ENCODE measurements at regions of chr1 and their contacts with region 1.

Region 1: GRCh38 chr1:154324669-154325582 is at the start of gene ATP8B2:
- DNase-seq: peak; percentile 72 to 91 (median 82)
- ATAC-seq: peak; percentile 48 to 54
- H3K4me3 Mint-ChIP-seq: peak within 1 kb of the TSS; percentile 86 to 99 (median 95)
- H3K27ac Mint-ChIP-seq: peak within 1 kb of the TSS; percentile 84 to 98 (median 94)
- H3K4me1 Mint-ChIP-seq: peaks cover 23 to 49% (median 46%) of the 10 kb centered on the region in 4 donors
- H3K27me3 Mint-ChIP-seq: peaks cover 0 to 3% (median 0%) of the 10 kb centered on the region in 5 donors
- polyA plus RNA-seq, gene ATP8B2: 48.5 to 65.1 (median 55.6) TPM

Region 2: DNA sequence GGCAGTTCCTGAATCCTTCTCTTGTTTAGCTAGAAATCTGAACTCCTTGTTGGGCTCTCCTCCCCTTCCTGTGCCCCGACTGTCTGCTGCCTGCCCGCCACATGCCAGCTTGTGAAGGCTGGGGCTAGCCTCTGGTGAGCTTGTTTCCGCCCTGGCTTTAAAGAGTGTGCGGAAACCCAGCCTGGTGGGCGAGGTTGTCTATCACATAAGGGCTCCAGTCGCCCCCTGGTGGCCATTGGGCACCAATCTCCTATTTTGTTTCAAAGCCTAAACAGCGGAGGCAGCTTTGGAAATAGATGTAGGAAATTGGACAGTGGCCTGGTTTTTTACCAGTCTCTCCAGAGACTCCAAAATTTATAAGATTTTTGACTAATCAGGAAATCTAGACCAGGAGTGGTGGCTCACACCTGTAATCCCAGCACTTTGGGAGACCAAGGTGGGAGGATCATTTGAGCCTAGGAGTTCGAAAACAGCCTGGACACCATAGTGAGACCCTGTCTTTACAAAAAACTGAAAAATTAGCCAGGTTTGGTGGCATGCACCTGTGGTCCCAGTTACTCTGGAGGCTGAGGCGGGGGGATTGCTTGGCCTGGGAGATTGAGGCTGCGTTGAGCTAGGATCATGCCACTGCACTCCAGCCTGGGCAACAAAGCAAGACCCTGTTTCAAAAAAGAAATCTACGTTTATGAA is 10.2 kb after region 1 on chr1:
- POLR2A ChIA-PET with region 1: interaction called, 358 read pairs
- DNase-seq: peak; percentile 83 to 97 (median 88)
- ATAC-seq: peak; percentile 97 to 99
- H3K4me3 Mint-ChIP-seq: peak overlapping the region in 9 of 10 donors; percentile 47 to 87 (median 76)
- H3K27ac Mint-ChIP-seq: peak overlapping the region; percentile 89 to 98 (median 93)
- H3K4me1 Mint-ChIP-seq: peaks cover 37 to 90% (median 83%) of the 10 kb centered on the region in 4 donors
- H3K27me3 Mint-ChIP-seq: no peaks in the 10 kb centered on the region

Region 3: GRCh38 chr1:154352581-154353459 is 27.9 kb after region 1 on chr1:
- POLR2A ChIA-PET with region 1: interaction called, 358 read pairs
- DNase-seq: peak in 8 of 10 donors; percentile 25 to 72 (median 40)
- ATAC-seq: peak; percentile 81 to 83
- H3K4me3 Mint-ChIP-seq: peak overlapping the region; percentile 78 to 99 (median 91)
- H3K27ac Mint-ChIP-seq: peak overlapping the region; percentile 86 to 96 (median 90)
- H3K4me1 Mint-ChIP-seq: peaks cover 28 to 63% (median 48%) of the 10 kb centered on the region in 4 donors
- H3K27me3 Mint-ChIP-seq: peaks cover 0 to 8% (median 0%) of the 10 kb centered on the region in 5 donors

Measured in naive thymus-derived CD8-positive, alpha-beta T cell (primary cell).